Pancreas (tissue), 10 donors: ENCODE measurements at regions of chr3 and their contacts with region 1.

Region 1: DNA sequence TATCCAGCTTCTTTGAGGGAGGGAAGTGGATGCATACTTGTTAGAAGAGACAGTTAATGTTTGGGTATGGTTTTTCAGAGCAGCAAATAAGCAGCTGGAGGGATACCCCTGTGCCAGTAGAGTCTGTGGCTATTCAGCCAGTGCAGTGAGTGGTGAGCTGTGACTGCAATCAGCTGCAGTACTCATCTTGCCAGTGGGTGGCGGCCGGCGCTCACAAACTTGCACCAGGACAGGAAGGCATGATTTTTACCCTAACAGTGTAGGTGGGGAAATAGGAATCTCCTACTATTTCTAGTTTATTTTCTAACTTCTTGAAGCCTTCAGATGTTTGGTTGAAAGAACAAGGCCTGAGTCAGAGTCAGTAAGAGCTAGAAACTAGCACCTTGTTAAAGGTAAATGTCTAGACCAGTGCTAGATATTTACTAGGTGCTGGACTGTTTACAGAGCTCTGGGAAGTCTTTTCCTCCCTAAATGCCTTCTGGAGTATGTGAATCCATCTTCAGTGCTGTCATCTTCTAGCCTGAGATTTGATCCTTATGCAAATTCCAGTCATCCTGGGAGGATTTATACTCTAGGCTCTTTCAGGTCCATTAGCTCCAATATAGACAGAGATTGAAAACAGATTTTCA is 23.6 kb downstream of the TIMP4 start:
- DNase-seq: peak; percentile 34 to 84 (median 62)
- ATAC-seq: peak; percentile 74 to 98 (median 94)
- H3K4me3 ChIP-seq: no peak overlapping the region
- H3K27ac ChIP-seq: no peak overlapping the region
- H3K4me1 ChIP-seq: no peaks in the 10 kb centered on the region
- H3K27me3 ChIP-seq: no peaks in the 10 kb centered on the region
- CTCF ChIP-seq: peak; percentile 53 to 85 (median 68)

Region 2: DNA sequence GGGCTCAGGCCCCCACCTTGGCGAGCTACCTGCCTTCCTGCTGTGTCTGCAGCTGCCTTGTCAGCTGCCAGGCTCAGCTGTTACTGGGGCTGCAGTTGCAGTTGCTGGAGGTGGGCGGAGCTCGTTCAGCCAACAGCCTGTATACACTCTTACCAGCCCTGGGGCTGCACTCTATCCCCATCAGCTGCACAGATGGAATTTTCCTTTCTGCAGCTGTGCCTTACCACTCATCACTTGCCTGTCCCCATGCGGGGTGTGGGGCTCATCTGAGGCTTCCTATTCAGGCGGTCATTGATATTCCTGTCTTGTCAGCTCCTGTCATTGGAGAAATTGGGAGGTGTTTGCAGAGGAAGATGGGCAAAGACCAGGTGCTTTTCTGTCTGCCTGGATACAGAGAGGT is 140.0 kb before region 1 on chr3:
- intact Hi-C with region 1: no loop called
- DNase-seq: no peak
- ATAC-seq: peak in 1 of 4 donors; percentile 18
- H3K4me3 ChIP-seq: no peak overlapping the region
- H3K27ac ChIP-seq: no peak overlapping the region
- H3K4me1 ChIP-seq: no peaks in the 10 kb centered on the region
- H3K27me3 ChIP-seq: peaks cover 0 to 11% (median 0%) of the 10 kb centered on the region in 4 donors
- CTCF ChIP-seq: no peak

Region 3: DNA sequence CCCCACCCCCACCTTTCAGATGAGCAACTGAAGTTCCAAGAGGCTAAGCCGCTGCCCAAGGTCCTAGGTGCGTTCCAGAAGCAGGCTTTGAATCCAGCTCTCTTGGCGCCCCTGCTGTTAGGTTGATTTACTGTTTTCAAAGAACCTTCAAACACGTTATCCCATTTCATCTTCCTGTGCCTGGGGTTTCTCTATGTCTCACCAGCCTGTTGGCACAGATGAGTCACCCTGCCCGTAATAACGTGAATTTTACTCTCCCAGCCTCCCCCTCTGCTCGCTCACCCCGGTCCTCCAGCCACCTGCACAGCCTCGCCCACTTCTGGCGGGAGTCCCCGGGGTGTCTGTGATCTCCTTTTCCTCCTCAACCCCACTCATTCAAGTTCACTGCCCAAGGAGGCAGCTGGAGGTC is 336.1 kb after region 1 on chr3:
- intact Hi-C with region 1: loop called in 2 of 3 experiments (anchors 5 to 10 kb)
- DNase-seq: no peak
- ATAC-seq: no peak
- H3K4me3 ChIP-seq: no peak overlapping the region
- H3K27ac ChIP-seq: no peak overlapping the region
- H3K4me1 ChIP-seq: no peaks in the 10 kb centered on the region
- H3K27me3 ChIP-seq: no peaks in the 10 kb centered on the region
- CTCF ChIP-seq: no peak

Region 4: GRCh38 chr3:12484198-12484974 is 349.2 kb after region 1 on chr3 and contains the start of gene TSEN2:
- intact Hi-C with region 1: loop called in 2 of 3 experiments (anchors 5 to 10 kb)
- DNase-seq: peak; percentile 90 to 100 (median 97)
- ATAC-seq: peak; percentile 90 to 99 (median 96)
- H3K4me3 ChIP-seq: peak within 1 kb of the TSS; percentile 63 to 72 (median 64)
- H3K27ac ChIP-seq: peak within 1 kb of the TSS; percentile 65 to 77 (median 69)
- H3K4me1 ChIP-seq: peaks cover 0 to 14% (median 9%) of the 10 kb centered on the region in 3 donors
- H3K27me3 ChIP-seq: no peaks in the 10 kb centered on the region
- CTCF ChIP-seq: no peak
- total RNA-seq, gene TSEN2: 8.7 to 12.8 (median 9.1) TPM

Region 5: GRCh38 chr3:13229273-13229949 is 1094.3 kb after region 1 on chr3:
- intact Hi-C with region 1: no loop called
- DNase-seq: no peak
- ATAC-seq: peak in 3 of 4 donors; percentile 45 to 69 (median 57)
- H3K4me3 ChIP-seq: no peak overlapping the region
- H3K27ac ChIP-seq: no peak overlapping the region
- H3K4me1 ChIP-seq: no peaks in the 10 kb centered on the region
- H3K27me3 ChIP-seq: no peaks in the 10 kb centered on the region
- CTCF ChIP-seq: no peak